Heart left ventricle (tissue), 16 donors: ENCODE measurements at regions of chr7 and their contacts with region 1.

Region 1: DNA sequence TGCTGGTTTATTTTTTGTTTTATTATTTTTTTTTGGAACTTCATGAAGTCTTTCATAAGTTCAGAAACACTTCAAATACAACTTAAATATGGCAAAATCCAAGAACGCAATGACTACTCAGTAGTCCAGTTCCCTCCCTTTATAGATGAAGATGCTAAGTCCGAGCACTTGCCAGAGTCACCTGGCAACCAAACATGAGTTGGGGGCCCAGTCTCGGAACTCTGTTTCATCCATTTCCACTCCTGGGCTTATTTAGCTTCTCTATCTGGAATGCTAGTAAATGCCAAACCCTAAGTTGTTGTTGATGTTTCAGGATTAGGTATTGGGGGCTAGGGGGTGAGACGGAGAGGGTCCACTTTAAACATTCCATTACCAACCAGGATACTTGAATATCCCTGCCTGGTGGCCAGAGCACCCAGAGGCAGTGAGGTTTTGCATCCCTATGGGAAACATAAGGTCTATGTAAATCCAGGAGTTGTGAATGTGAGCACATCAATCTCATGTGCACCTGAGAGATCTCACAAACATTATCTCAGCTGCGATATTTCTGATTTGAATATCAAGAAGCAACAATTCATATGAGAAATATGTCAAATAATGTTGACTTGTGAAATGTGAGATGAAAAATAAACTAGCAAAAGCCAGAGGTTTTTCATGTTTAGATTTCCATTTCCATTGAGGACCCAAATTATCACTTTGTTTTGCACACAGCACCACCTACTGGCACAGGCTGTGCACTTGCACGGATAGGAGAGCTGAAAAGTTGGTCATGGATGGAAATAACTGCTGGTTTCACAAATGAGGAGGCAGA is 129.3 kb downstream of the PKD1L1 start:
- DNase-seq: peak in 4 of 5 donors; percentile 59 to 74 (median 68)
- ATAC-seq: peak in 3 of 4 donors; percentile 61 to 78 (median 63)
- H3K4me3 ChIP-seq: no peak overlapping the region
- H3K27ac ChIP-seq: no peak overlapping the region
- H3K4me1 ChIP-seq: peaks cover 0 to 21% (median 8%) of the 10 kb centered on the region in 12 donors
- H3K27me3 ChIP-seq: no peaks in the 10 kb centered on the region
- CTCF ChIP-seq: peak; percentile 84 to 100 (median 92)
- POLR2A ChIP-seq: no peak

Region 2: DNA sequence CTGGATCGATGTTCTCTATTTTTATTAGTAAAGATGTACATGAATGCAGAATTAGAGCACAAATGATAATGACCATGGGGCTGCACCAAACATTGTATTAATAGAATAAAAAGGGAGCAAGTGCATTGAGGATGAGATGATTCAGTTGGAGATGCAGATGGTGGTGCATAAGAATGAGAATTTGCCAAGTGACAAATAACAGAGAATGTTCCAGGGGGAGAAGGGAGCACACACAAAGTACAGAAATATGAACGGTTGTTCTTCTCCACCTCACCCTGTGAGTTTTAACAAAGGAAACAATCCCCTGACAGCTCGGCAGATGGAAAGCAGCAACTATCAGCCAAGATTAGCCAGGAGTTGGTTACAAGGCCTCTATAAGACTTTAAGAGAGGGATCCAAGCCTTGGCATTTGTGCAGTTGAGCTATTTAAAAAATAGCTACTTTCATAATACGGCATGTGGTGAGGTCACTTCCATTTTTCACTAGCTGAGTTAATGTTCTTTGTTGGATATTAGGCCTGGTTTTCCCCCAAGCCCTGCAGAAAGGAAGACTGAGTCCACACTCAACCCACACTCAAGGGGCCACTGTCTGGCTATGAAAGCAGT is 699.6 kb before region 1 on chr7:
- intact Hi-C with region 1: no loop called
- DNase-seq: no peak
- ATAC-seq: no peak
- H3K4me3 ChIP-seq: no peak overlapping the region
- H3K27ac ChIP-seq: peak overlapping the region in 1 of 12 donors; percentile 3
- H3K4me1 ChIP-seq: peaks cover 0 to 3% (median 0%) of the 10 kb centered on the region in 12 donors
- H3K27me3 ChIP-seq: no peaks in the 10 kb centered on the region
- CTCF ChIP-seq: no peak
- POLR2A ChIP-seq: no peak

Region 3: DNA sequence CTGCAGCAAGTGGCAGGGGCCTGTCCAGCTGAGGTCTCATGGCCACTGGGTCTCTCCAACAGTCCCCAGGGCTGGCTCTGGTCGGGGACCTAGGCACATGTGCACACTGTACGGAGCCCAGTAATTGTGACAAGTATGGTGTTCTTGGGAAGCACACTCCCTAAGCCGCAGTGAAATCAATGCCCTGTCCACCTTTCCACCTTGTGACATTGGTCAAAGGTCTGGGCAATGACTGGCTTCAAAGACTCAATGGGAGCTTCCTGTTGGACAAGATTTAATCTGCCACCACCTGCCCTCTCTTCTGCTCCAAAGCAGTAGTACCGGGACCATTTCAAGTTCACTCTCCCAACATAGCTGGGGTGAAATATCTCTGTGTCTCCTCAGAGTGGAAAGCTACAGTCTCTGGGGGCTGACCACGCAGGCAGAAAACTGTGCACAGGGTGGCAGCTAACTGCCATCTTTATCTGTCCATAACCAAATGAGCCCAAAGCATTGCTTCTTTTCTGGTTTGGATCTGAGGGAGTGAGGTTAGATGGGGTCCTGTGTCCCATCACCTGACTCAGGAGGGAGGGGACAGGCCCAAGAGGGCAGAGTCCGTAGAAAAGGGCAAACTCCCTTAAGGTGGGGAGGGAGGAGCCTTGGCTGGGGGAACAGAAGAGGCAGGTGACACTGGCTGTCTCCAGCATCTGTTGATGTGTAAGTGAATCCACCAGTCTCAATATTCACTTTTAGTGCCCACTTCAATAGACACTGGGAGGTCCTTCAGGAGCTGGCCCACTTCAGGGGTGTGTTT is 544.8 kb before region 1 on chr7:
- intact Hi-C with region 1: loop called in 3 of 10 experiments (anchors 5 kb)
- DNase-seq: no peak
- ATAC-seq: no peak
- H3K4me3 ChIP-seq: no peak overlapping the region
- H3K27ac ChIP-seq: no peak overlapping the region
- H3K4me1 ChIP-seq: peaks cover 0 to 5% (median 0%) of the 10 kb centered on the region in 12 donors
- H3K27me3 ChIP-seq: no peaks in the 10 kb centered on the region
- CTCF ChIP-seq: no peak
- POLR2A ChIP-seq: no peak

Region 4: DNA sequence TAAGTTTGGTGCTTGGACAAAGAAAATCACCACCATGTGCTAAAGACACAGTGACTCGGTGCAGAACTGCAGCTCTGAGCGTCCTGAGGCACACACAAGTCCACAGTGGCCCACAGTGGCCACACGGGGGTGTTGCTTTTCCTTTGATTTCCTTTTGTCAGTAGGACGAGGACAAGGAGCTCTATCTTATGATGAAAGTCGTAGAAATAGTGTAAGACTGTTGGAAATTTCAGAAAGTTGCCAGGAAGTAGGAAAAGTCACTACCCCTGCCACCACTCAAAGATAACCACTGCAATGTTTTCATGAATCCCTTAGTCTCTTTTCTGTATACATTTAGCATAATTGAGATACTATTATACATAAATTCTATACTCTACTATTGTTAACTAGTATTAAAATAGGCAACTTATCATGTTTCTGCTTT is 383.1 kb before region 1 on chr7:
- intact Hi-C with region 1: loop called (anchors 2 to 10 kb)
- DNase-seq: peak in 4 of 5 donors; percentile 68 to 83 (median 72)
- ATAC-seq: peak; percentile 82 to 92 (median 87)
- H3K4me3 ChIP-seq: no peak overlapping the region
- H3K27ac ChIP-seq: no peak overlapping the region
- H3K4me1 ChIP-seq: peaks cover 0 to 5% (median 0%) of the 10 kb centered on the region in 12 donors
- H3K27me3 ChIP-seq: no peaks in the 10 kb centered on the region
- CTCF ChIP-seq: peak; percentile 63 to 87 (median 78)
- POLR2A ChIP-seq: no peak

Region 5: DNA sequence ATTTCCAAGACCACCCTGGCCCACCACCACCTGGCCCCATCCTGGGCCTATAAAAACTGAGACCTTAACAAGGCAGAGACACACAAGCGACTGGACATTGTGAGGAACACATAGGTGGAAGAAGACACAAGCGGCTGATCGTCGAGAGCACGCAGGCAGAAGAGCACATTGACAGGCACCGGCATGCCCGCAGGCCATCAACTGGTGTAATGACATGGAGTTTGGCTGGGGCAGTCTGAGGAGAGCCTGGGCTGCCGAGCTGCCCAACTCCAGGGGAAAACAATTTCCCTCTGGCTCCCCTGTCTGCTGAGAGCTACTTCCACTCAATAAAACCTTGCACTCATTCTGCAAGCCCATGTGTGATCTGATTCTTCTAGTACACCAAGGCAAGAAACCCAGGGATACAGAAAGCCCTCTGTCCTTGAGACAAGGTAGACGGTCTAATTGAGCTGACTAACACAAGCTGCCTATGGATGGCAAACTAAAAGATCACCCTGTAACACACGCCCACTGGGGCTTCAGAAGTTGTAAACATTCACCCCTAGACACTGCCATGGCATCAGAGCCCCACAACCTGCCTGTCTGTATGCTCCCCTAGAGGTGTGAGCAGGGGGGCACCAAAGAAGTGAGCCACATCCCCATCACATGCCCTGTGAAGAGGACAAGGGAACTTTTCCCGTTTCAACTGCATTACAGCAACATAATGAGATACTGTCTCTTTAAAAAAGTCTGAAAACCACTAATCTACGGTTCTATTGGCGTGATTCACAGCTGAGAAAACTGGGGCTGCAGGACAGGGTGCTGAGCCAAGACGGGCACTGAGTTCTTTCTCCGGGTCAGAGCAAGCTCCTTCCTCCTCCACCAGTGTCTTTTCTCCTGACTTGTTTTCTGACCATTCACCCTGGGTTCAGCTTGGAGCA is 218.5 kb before region 1 on chr7:
- intact Hi-C with region 1: no loop called
- DNase-seq: peak in 1 of 5 donors; percentile 40
- ATAC-seq: peak in 2 of 4 donors; percentile 41 to 45
- H3K4me3 ChIP-seq: no peak overlapping the region
- H3K27ac ChIP-seq: no peak overlapping the region
- H3K4me1 ChIP-seq: peaks cover 0 to 37% (median 10%) of the 10 kb centered on the region in 12 donors
- H3K27me3 ChIP-seq: no peaks in the 10 kb centered on the region
- CTCF ChIP-seq: no peak
- POLR2A ChIP-seq: no peak